ENCODE measurements at regions of chr10 and their contacts with region 1.

Region 1: DNA sequence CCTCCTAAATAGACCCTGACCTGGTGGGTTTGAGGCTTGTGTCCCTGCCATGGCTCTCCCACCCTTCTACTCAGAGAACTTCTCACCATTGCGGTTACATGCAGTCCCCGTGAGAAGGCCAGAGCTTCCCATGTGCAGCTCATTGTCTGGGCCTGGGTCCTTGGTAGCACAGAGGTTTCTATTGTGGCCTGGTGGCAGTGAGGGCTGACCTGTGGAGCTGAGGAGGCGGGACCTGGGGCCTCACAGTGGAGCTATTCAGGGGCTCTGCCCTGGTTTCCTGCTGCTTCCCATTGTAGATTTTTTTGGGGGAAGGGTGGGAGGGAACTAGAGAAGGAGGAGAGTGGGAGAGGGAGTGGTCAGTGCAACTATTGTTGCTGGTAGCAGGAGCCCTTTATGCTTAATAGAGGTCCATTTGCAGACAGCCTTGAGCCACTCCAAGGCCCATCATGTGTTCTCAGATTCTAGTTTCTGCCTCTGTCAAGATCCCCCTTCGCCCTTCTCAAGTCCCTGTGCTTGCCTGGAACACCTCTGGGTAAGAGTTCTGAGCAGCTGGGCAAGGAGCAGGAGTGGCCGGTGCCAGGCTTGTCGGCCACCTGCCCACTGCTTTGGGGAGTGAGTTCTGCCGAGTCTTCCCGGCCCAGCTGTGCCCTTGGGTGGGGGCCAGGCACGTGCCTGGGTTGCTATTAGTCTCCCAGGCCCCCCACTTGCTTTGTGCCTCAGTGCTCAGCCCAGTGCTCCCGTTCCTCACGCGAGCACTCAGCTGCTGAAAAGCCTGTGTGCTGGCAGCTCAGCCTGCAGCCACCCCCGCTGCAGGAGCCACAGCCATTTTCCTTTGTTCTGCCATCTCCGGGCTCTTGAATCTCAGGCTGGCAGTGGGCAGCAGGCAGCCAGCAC is 10.7 kb downstream of the TSPAN14 start:
- DNase-seq: peak in 3 of 9 experiments; percentile 32 to 60 (median 41)
- ATAC-seq: peak; percentile 2
- H3K4me3 ChIP-seq: peak overlapping the region; percentile 25 to 30
- H3K4me3 Mint-ChIP-seq: peak overlapping the region; percentile 77
- H3K27ac ChIP-seq: peak overlapping the region; percentile 49 to 81
- H3K27ac Mint-ChIP-seq: peak overlapping the region; percentile 98
- H3K4me1 ChIP-seq: peaks cover 94% of the 10 kb centered on the region
- H3K4me1 Mint-ChIP-seq: peaks cover 96% of the 10 kb centered on the region
- H3K27me3 ChIP-seq: no peaks in the 10 kb centered on the region
- H3K27me3 Mint-ChIP-seq: no peaks in the 10 kb centered on the region
- CTCF ChIP-seq: no peak

Region 2: DNA sequence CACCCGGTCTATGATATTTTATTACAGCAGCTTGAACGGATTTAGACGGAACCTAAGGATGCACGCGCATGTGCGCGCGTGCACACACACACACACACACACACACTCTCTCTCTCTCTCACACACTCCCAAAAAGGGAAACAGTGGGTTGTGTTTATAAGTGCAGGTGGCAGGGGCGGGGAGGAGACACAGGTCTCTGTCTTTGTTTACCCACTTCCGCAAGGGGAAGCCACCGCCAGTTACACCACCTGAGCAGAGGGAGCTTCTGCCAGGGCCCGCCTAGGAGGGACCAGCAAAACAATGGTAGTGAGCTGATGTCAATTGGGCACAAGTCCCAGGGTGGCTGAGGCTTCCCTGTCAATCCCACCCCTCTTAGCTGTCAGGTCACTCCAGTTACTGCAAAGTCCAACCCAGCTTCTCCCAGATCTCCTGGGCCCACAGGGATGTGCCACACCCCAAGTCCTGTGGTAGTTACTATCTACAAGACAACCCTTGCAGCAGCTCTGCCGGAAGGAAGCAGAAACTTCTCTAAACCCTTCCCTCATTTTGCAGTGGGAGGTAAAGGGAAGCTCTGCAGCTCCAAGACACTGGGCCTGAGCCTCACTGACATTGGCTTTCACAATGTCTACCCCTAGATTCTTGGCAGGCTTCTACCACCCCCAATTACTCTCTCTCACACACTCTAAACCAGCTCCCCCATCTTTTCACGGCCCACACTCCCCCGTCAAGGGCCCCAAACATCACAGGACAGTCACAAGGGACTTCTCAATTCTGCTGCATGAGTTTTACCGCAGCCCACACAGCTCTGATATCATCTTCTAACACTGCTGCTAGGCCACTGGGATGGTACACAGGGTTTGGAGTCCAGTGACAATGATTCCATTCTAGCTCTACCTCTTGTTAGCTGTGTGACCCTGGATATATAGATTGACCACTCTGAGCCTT is 277.1 kb before region 1 on chr10:
- CTCF ChIA-PET with region 1: no interaction called
- POLR2A ChIA-PET with region 1: no interaction called
- intact Hi-C with region 1: loop called in 1 of 2 experiments (anchors 5 kb)
- DNase-seq: peak; percentile 65 to 94 (median 83)
- ATAC-seq: peak; percentile 90
- H3K4me3 ChIP-seq: peak overlapping the region; percentile 34 to 42
- H3K4me3 Mint-ChIP-seq: peak overlapping the region; percentile 70
- H3K27ac ChIP-seq: peak overlapping the region; percentile 64 to 71
- H3K27ac Mint-ChIP-seq: peak overlapping the region; percentile 95
- H3K4me1 ChIP-seq: peaks cover 92% of the 10 kb centered on the region
- H3K4me1 Mint-ChIP-seq: peaks cover 86% of the 10 kb centered on the region
- H3K27me3 ChIP-seq: no peaks in the 10 kb centered on the region
- H3K27me3 Mint-ChIP-seq: no peaks in the 10 kb centered on the region
- CTCF ChIP-seq: no peak

Region 3: GRCh38 chr10:80477813-80478212 is 13.0 kb after region 1 on chr10:
- CTCF ChIA-PET with region 1: interaction called, 312 read pairs
- POLR2A ChIA-PET with region 1: interaction called, 11 read pairs
- intact Hi-C with region 1: loop called in 1 of 2 experiments (anchors 1 kb)
- DNase-seq: peak in 1 of 9 experiments; percentile 21
- ATAC-seq: no peak
- H3K4me3 ChIP-seq: no peak overlapping the region
- H3K4me3 Mint-ChIP-seq: no peak overlapping the region
- H3K27ac ChIP-seq: peak overlapping the region in 1 of 2 experiments; percentile 39
- H3K27ac Mint-ChIP-seq: peak overlapping the region; percentile 82
- H3K4me1 ChIP-seq: peaks cover 61% of the 10 kb centered on the region
- H3K4me1 Mint-ChIP-seq: peaks cover 79% of the 10 kb centered on the region
- H3K27me3 ChIP-seq: no peaks in the 10 kb centered on the region
- H3K27me3 Mint-ChIP-seq: no peaks in the 10 kb centered on the region
- CTCF ChIP-seq: no peak

Region 4: DNA sequence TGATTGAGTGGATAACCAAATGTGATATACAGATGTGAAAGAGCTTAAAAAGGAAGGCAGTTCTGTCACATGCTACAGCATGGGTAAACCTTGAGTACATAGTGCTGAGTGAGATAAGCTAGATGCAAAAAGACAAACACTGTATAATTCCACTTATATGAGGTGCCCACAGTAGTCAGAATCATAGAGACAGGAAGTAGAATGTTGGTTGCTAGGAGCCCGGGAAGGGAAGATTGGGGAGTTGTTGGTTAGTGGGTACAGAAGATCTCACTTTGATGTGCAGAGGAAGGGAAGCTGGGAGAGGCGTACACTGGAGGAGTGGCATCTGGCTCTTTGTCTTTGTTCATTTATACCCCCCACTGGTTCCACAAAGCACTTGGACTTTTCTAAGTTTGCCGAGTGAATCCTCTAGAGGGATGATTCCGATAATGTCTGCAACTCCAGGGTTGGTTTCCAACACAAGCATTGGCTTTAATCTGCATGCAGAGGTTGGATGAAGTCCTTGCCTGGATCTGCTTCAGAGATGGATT is 28.8 kb after region 1 on chr10:
- CTCF ChIA-PET with region 1: interaction called, 404 read pairs
- POLR2A ChIA-PET with region 1: interaction called, 122 read pairs
- intact Hi-C with region 1: no loop called
- DNase-seq: peak in 3 of 9 experiments; percentile 25 to 73 (median 37)
- ATAC-seq: peak; percentile 66
- H3K4me3 ChIP-seq: no peak overlapping the region
- H3K4me3 Mint-ChIP-seq: peak overlapping the region; percentile 51
- H3K27ac ChIP-seq: peak overlapping the region in 1 of 2 experiments; percentile 68
- H3K27ac Mint-ChIP-seq: peak overlapping the region; percentile 89
- H3K4me1 ChIP-seq: peaks cover 98% of the 10 kb centered on the region
- H3K4me1 Mint-ChIP-seq: peaks cover 99% of the 10 kb centered on the region
- H3K27me3 ChIP-seq: no peaks in the 10 kb centered on the region
- H3K27me3 Mint-ChIP-seq: no peaks in the 10 kb centered on the region
- CTCF ChIP-seq: no peak

Region 5: GRCh38 chr10:80878330-80878729 is 413.5 kb after region 1 on chr10:
- CTCF ChIA-PET with region 1: no interaction called
- POLR2A ChIA-PET with region 1: no interaction called
- intact Hi-C with region 1: no loop called
- DNase-seq: no peak
- ATAC-seq: no peak
- H3K4me3 ChIP-seq: no peak overlapping the region
- H3K4me3 Mint-ChIP-seq: no peak overlapping the region
- H3K27ac ChIP-seq: no peak overlapping the region
- H3K27ac Mint-ChIP-seq: no peak overlapping the region
- H3K4me1 ChIP-seq: no peaks in the 10 kb centered on the region
- H3K4me1 Mint-ChIP-seq: no peaks in the 10 kb centered on the region
- H3K27me3 ChIP-seq: no peaks in the 10 kb centered on the region
- H3K27me3 Mint-ChIP-seq: peaks cover 7% of the 10 kb centered on the region
- CTCF ChIP-seq: no peak

Measured in CD8-positive, alpha-beta T cell (primary cell).